A673 (cell line): ENCODE measurements at regions of chr4 and their contacts with region 1.

Region 1: GRCh38 chr4:67909905-67910584 is 26.2 kb upstream of the TMPRSS11D start:
- DNase-seq: peak; percentile 14
- H3K4me3 ChIP-seq: no peak overlapping the region
- H3K27ac ChIP-seq: no peak overlapping the region
- H3K4me1 ChIP-seq: no peaks in the 10 kb centered on the region
- H3K27me3 ChIP-seq: no peaks in the 10 kb centered on the region
- CTCF ChIP-seq: peak; percentile 57

Region 2: GRCh38 chr4:67736262-67736661 is 173.8 kb before region 1 on chr4:
- CTCF ChIA-PET with region 1: no interaction called
- POLR2A ChIA-PET with region 1: no interaction called
- intact Hi-C with region 1: no loop called
- DNase-seq: no peak
- H3K4me3 ChIP-seq: no peak overlapping the region
- H3K27ac ChIP-seq: no peak overlapping the region
- H3K4me1 ChIP-seq: no peaks in the 10 kb centered on the region
- H3K27me3 ChIP-seq: no peaks in the 10 kb centered on the region
- CTCF ChIP-seq: no peak

Region 3: DNA sequence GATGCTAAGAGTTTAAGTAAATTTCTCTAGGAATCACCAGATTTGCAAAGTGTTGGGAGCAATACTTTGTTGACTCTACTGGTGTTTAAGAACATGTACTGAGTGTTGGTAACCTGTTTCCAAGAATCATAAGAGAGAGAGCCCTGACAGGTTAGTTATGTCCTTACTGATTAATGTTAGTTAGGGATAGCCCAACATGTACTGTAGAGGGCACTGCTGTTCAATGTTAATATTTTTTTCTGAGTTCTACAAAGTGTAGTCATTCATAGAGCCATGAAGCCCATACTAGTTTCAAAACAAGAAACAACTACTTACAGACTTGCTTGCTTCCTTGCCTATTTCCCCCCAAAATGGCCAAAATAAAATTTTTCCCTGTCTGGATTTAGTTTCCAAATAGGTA is 38.2 kb before region 1 on chr4:
- CTCF ChIA-PET with region 1: no interaction called
- POLR2A ChIA-PET with region 1: no interaction called
- intact Hi-C with region 1: loop called (anchors 5 kb)
- DNase-seq: peak; percentile 20
- H3K4me3 ChIP-seq: no peak overlapping the region
- H3K27ac ChIP-seq: no peak overlapping the region
- H3K4me1 ChIP-seq: no peaks in the 10 kb centered on the region
- H3K27me3 ChIP-seq: no peaks in the 10 kb centered on the region
- CTCF ChIP-seq: peak; percentile 44

Region 4: DNA sequence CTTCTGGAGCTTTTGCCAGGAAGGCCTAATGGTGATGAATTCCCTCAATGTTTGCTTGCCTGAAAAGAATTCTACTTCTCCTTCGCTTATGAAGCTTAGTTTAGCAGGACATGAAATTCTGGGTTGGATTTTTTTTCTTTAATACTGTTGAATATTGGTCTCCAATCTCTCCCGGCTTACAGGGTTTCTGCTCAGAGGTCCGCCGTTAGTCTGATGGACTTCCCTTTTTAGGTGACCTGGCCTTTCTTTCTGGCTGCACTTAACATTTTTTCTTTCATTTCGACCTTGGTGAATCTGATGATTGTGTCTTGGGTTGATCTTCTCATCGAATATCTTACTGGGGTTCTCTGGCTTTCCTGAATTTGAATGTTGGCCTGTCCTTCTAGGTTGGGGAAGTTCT is 70.5 kb after region 1 on chr4:
- CTCF ChIA-PET with region 1: no interaction called
- POLR2A ChIA-PET with region 1: no interaction called
- intact Hi-C with region 1: no loop called
- DNase-seq: no peak
- H3K4me3 ChIP-seq: no peak overlapping the region
- H3K27ac ChIP-seq: no peak overlapping the region
- H3K4me1 ChIP-seq: no peaks in the 10 kb centered on the region
- H3K27me3 ChIP-seq: no peaks in the 10 kb centered on the region
- CTCF ChIP-seq: no peak

Region 5: GRCh38 chr4:68180849-68181526 is 270.9 kb after region 1 on chr4:
- CTCF ChIA-PET with region 1: no interaction called
- POLR2A ChIA-PET with region 1: no interaction called
- intact Hi-C with region 1: no loop called
- DNase-seq: no peak
- H3K4me3 ChIP-seq: no peak overlapping the region
- H3K27ac ChIP-seq: no peak overlapping the region
- H3K4me1 ChIP-seq: no peaks in the 10 kb centered on the region
- H3K27me3 ChIP-seq: no peaks in the 10 kb centered on the region
- CTCF ChIP-seq: no peak

Region 6: DNA sequence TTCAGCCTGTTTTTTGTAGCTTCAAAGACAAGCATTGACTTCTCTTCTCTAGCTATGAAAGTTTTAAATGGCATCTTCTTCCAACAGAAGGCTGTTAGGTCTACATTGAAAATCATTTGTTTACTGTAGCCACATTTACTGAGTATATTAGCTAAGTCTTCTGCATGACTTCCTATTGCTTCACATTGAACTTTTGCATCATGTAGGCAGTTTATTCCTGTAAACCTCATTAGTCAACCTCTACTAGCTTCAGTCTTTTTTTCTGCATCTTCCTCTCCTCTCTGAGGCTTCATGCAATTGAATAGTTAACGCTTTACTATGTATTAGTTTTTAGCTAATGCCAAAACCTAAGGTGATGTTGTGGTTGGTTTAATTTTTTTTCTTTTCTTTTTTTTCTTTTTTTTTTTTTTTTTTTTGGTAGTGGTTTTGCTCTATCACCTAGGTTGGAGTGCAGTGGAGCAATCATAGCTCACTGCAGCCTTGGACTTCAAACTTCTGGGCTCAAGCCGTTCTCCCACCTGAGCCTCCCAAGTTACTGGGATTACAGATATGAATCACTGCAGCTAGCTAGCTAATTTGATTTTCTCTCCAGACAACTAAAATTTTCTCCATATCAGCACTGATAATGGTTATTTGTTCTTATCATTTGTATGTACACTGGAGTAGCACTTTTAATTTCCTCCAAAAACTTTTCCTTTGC is 1038.1 kb after region 1 on chr4:
- CTCF ChIA-PET with region 1: no interaction called
- POLR2A ChIA-PET with region 1: no interaction called
- intact Hi-C with region 1: no loop called
- DNase-seq: no peak
- H3K4me3 ChIP-seq: no peak overlapping the region
- H3K27ac ChIP-seq: no peak overlapping the region
- H3K4me1 ChIP-seq: no peaks in the 10 kb centered on the region
- H3K27me3 ChIP-seq: no peaks in the 10 kb centered on the region
- CTCF ChIP-seq: no peak